ENCODE measurements at regions of chr3 and their contacts with region 1.

Region 1: GRCh38 chr3:114498779-114499370 is 205.0 kb downstream of the TIGIT start:
- DNase-seq: no peak
- H3K4me3 Mint-ChIP-seq: no peak overlapping the region
- H3K27ac Mint-ChIP-seq: no peak overlapping the region
- H3K4me1 Mint-ChIP-seq: peaks cover 36% of the 10 kb centered on the region
- H3K27me3 Mint-ChIP-seq: peaks cover 6% of the 10 kb centered on the region

Region 2: DNA sequence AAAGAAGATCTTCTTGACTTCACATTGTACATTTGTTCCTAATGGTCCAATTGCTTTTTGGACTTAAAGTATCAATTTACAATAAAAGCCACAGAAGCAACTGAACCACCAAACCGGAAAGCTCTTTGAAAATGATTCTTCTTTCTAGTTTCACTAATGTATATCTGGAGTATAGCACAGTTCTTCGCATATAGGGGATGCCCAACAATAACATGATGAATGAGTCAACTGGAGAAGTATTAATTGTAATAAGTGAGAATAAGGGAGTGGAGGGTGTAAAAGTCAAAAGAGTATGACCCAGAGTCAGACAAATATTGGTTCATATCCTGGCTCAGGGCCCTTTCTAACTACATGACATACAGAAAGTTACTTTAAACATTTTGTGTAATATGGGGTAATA is 223.0 kb after region 1 on chr3:
- CTCF ChIA-PET with region 1: no interaction called
- intact Hi-C with region 1: loop called (anchors 5 kb)
- DNase-seq: no peak
- H3K4me3 Mint-ChIP-seq: no peak overlapping the region
- H3K27ac Mint-ChIP-seq: no peak overlapping the region
- H3K4me1 Mint-ChIP-seq: peaks cover 23% of the 10 kb centered on the region
- H3K27me3 Mint-ChIP-seq: no peaks in the 10 kb centered on the region

Region 3: DNA sequence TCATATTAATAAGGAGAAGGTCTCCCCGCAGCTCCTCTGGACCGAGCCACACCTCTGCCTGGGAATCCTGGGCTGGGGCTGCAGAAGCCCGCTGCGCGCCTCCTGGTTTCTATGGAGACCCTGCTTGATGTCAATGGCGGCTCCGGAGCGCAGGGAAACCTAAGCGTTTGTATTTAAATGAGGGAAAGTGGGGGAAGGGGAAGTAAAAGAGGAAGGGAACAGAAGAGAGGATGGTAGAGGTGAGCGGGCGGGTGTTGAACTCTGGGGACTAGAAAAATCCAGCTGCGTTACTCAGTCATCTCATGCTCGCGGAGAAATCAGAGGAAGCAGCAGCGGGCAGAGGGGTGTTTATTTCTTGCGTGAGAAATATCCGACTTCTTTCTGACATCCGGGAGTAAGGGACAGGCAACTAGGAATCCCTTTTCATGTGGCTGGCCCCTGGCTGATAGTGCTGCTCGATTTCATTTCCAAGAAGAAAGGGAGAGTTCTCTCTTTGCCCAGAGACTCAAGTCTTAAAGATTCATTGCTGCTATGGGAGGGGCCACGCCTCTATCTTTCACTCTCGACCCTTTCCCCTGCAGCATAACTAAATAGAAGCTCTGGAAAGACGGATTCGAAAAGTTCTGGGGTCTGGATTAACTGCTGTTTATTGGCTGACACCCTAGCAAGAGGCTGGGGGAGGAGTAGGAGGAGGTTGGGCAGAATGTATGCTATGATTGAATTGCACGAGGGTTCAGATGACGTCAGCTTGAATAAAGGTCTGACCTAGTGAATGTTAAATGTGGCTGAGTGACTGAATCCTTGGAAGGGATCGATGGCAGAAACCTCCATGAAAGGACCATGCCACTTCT is 1013.9 kb after region 1 on chr3:
- CTCF ChIA-PET with region 1: no interaction called
- intact Hi-C with region 1: loop called (anchors 10 kb)
- DNase-seq: peak; percentile 50
- H3K4me3 Mint-ChIP-seq: peak overlapping the region; percentile 83
- H3K27ac Mint-ChIP-seq: no peak overlapping the region
- H3K4me1 Mint-ChIP-seq: peaks cover 20% of the 10 kb centered on the region
- H3K27me3 Mint-ChIP-seq: peaks cover 33% of the 10 kb centered on the region